Calu3 (cell line): ENCODE measurements at regions of chr2 and their contacts with region 1.

Region 1: GRCh38 chr2:164841719-164842623 is at the start of gene COBLL1:
- DNase-seq: peak; percentile 92
- H3K4me3 Mint-ChIP-seq: peak within 1 kb of the TSS; percentile 97
- H3K27ac Mint-ChIP-seq: peak within 1 kb of the TSS; percentile 86
- H3K4me1 Mint-ChIP-seq: peaks cover 15% of the 10 kb centered on the region
- H3K27me3 Mint-ChIP-seq: no peaks in the 10 kb centered on the region
- CTCF ChIP-seq: peak; percentile 77
- total RNA-seq, gene COBLL1: 44.9 and 56.9 TPM in 2 replicates

Region 2: GRCh38 chr2:164737612-164738081 is 104.3 kb before region 1 on chr2:
- CTCF ChIA-PET with region 1: interaction called, 7 read pairs
- intact Hi-C with region 1: loop called (anchors 1 kb)
- DNase-seq: peak; percentile 63
- H3K4me3 Mint-ChIP-seq: no peak overlapping the region
- H3K27ac Mint-ChIP-seq: peak overlapping the region; percentile 26
- H3K4me1 Mint-ChIP-seq: peaks cover 68% of the 10 kb centered on the region
- H3K27me3 Mint-ChIP-seq: no peaks in the 10 kb centered on the region
- CTCF ChIP-seq: peak; percentile 77

Region 3: DNA sequence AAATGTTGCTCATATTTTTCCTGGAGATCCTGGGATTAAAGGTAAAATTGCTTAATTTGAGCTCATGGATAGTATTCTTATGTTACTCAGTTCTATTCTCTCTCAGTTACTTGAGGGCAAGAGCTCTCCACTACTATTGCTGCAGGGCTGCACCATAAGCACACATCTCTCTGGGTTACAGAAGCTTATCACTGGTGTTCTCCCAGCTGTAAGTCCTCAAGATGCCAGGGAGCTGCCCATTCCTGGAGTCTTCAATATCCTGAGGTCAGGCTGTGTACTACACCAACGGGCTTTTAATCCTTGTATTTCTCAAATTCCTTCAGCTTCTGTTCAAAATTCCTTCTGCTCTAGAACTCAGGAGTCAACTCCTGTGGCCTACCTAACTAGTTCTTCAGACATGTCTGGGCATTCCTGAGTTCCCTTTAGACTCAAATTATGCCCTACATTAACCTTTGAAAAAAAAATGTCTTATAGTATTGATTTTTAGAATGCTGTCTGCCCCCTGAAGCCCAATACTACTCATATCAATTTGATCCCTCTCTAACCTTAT is 17.4 kb after region 1 on chr2:
- CTCF ChIA-PET with region 1: interaction called, 17 read pairs
- intact Hi-C with region 1: loop called (anchors 2 kb)
- DNase-seq: no peak
- H3K4me3 Mint-ChIP-seq: no peak overlapping the region
- H3K27ac Mint-ChIP-seq: peak overlapping the region; percentile 82
- H3K4me1 Mint-ChIP-seq: peaks cover 33% of the 10 kb centered on the region
- H3K27me3 Mint-ChIP-seq: no peaks in the 10 kb centered on the region
- CTCF ChIP-seq: no peak

Region 4: GRCh38 chr2:164917296-164917903 is 75.4 kb after region 1 on chr2:
- CTCF ChIA-PET with region 1: interaction called, 27 read pairs
- intact Hi-C with region 1: loop called (anchors 1 kb)
- DNase-seq: peak; percentile 62
- H3K4me3 Mint-ChIP-seq: no peak overlapping the region
- H3K27ac Mint-ChIP-seq: no peak overlapping the region
- H3K4me1 Mint-ChIP-seq: peaks cover 32% of the 10 kb centered on the region
- H3K27me3 Mint-ChIP-seq: no peaks in the 10 kb centered on the region
- CTCF ChIP-seq: peak; percentile 49

Region 5: GRCh38 chr2:164937864-164938401 is 96.0 kb after region 1 on chr2:
- CTCF ChIA-PET with region 1: no interaction called
- intact Hi-C with region 1: no loop called
- DNase-seq: no peak
- H3K4me3 Mint-ChIP-seq: peak overlapping the region; percentile 55
- H3K27ac Mint-ChIP-seq: peak overlapping the region; percentile 77
- H3K4me1 Mint-ChIP-seq: peaks cover 27% of the 10 kb centered on the region
- H3K27me3 Mint-ChIP-seq: no peaks in the 10 kb centered on the region
- CTCF ChIP-seq: no peak